Activated T-helper 1 cell treated with anti-CD3 and anti-CD28 coated beads, Interleukin-12 subunit alpha, Interleukin-12 subunit beta, Interleukin-2, Interleukin-4 antibody, amounts not matched to agents 30 ng/mL and 10 ng/mL and 1 ng/mL, durations not matched to agents 14 hours and 24 hours and 36 hours (primary cell): ENCODE measurements at regions of chr3 and their contacts with region 1.

Region 1: DNA sequence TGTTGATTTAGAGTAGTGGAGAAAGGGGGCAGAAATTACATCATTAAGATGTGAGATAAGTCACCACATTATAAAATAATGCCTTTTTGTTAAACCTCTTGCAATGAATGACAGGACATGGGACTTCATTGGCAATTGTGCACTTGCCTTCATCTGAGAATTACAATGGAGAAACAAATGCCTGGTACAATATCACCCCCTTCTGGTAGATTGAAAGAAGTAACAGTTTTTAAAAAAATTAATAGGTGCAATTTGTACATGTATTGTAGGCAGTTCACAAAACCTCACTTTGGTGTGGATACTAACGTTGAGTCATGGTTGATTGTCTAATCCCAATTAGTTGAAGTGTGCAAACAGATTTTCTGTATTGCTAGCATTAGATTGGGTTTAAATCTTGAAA is 4.6 kb upstream of the P2RY14 start:
- DNase-seq: no peak
- H3K4me3 Mint-ChIP-seq: no peak overlapping the region
- H3K27ac Mint-ChIP-seq: peak overlapping the region; percentile 38
- H3K4me1 Mint-ChIP-seq: peaks cover 56% of the 10 kb centered on the region
- H3K27me3 Mint-ChIP-seq: no peaks in the 10 kb centered on the region

Region 2: GRCh38 chr3:150787741-150788370 is 495.1 kb before region 1 on chr3:
- intact Hi-C with region 1: loop called (anchors 5 kb)
- DNase-seq: peak; percentile 61
- H3K4me3 Mint-ChIP-seq: peak overlapping the region; percentile 43
- H3K27ac Mint-ChIP-seq: no peak overlapping the region
- H3K4me1 Mint-ChIP-seq: peaks cover 52% of the 10 kb centered on the region
- H3K27me3 Mint-ChIP-seq: peaks cover 6% of the 10 kb centered on the region

Region 3: DNA sequence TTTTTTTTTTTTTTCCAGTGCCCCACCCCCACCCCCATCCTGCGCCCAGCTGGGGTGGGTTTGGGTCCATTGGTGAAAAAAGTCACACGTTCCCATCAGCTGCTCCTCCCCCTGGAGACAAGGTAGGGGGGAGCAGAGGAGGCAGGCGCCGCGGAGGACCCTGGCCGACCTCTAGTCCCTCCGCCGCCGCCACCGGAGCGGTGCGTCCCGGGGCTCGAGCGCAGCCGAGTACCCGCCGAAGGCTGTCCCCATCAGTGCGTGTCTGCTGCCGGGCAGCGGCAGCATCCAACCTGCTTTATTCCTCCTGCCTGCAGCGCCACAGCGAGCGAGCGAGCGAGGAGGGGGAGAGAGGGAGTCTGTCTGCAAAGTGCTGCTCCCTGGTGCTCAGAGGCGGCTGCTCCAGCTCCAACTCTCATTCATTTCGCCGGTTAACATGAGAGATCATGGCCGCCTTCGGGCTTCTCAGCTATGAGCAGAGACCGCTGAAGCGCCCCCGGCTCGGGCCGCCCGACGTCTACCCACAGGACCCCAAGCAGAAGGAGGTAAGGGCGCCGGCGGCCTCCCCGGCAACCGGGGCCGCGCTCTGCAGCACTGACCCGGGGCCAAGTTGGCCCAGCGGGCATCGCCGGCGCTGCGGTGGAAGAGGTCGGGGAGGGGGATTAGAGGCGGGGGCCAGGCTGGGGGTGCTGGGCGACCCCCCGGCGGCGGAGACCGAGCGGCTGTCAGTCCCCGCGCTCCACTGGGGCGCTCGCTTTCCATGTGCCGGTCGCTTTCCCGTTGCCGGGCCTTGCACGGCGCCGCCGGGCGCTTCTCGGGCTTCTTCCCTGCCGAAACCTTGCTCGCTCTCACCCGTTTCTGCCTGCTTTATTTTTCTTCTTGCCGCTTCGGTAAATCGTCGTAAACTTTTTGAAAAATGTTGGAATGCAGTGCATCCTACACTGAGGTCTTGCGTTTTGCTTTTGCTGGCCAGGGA is 196.2 kb before region 1 on chr3:
- intact Hi-C with region 1: loop called (anchors 1 kb)
- DNase-seq: peak; percentile 58
- H3K4me3 Mint-ChIP-seq: peak overlapping the region; percentile 85
- H3K27ac Mint-ChIP-seq: peak overlapping the region; percentile 27
- H3K4me1 Mint-ChIP-seq: peaks cover 4% of the 10 kb centered on the region
- H3K27me3 Mint-ChIP-seq: peaks cover 48% of the 10 kb centered on the region

Region 4: DNA sequence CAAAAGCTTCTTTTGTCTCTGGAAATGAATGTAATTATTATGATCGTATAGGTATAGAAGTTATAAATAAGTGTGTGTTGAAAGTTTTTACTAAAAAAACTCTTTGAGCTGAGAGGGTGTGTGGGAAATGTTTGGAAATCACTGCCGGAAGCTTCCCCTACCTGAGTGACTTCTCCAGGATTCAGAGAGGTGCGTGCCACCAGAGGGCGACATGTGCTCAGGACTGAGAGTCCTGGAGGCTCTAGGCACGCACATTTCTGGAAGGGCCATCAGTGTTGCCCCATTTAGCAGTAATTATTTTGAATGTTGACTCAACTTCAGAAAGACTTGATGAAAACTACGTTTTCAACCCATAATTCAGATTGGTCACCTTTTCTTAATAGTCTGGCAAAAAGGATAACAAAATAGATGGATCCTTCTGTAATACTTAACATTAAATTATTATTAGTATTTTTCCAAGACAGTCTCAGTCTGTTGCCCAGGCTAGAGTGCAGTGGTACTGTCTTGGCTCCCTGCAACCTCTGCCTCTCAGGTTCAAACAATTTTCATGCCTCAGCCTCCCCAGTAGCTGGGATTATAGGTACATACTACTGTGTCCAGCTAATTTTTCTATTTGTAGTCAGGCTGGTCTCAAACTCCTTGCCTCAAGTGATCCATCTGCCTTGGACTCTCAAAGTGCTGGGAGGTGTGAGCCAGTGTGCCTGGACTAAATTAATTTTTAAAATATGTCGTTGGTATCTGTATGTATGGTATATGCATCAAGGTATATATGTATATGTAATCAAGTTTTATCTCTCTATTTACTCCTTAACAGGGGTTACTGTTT is 114.4 kb before region 1 on chr3:
- intact Hi-C with region 1: loop called (anchors 1 kb)
- DNase-seq: peak; percentile 66
- H3K4me3 Mint-ChIP-seq: no peak overlapping the region
- H3K27ac Mint-ChIP-seq: no peak overlapping the region
- H3K4me1 Mint-ChIP-seq: peaks cover 46% of the 10 kb centered on the region
- H3K27me3 Mint-ChIP-seq: peaks cover 3% of the 10 kb centered on the region

Region 5: GRCh38 chr3:151265866-151266265 is 17.1 kb before region 1 on chr3:
- intact Hi-C with region 1: loop called (anchors 1 kb)
- DNase-seq: no peak
- H3K4me3 Mint-ChIP-seq: no peak overlapping the region
- H3K27ac Mint-ChIP-seq: no peak overlapping the region
- H3K4me1 Mint-ChIP-seq: peaks cover 66% of the 10 kb centered on the region
- H3K27me3 Mint-ChIP-seq: peaks cover 5% of the 10 kb centered on the region

Region 6: DNA sequence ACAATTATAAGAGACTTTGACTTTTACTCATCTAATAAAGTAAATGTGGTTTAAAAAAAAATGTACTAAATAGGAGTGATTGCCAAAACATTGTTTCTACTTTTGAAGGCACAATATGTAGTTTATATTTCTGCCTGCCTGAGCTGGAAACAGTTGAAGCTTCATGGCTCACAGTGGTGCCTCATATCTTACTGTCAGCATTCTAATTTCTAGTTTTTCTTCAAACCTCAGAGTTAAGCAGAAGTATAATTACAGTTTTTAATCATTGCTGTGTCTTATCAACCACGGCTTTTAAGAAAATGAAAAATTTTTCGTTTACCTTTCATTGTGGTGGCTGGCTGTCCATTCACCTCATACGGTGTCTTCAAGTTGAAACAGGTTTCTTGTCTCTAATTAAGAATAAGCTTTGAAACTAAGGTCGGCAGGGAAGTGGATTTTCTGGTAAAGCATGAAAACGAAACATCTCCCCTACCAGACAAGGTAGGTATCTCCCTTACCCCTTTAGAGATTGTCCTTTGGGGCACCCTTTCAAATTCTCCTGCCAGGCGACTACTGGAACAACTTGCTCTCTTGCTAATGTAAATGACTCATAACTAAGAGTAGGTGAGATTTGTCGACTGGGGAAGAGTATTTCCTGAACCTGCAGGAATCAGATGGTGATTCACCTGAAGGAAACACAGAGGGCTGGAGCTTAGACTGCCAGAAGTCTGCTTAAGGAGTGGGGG is 33.5 kb after region 1 on chr3 and contains the start of gene GPR87:
- intact Hi-C with region 1: loop called (anchors 1 kb)
- DNase-seq: no peak
- H3K4me3 Mint-ChIP-seq: peak within 1 kb of the TSS; percentile 7
- H3K27ac Mint-ChIP-seq: peak within 1 kb of the TSS; percentile 61
- H3K4me1 Mint-ChIP-seq: peaks cover 24% of the 10 kb centered on the region
- H3K27me3 Mint-ChIP-seq: no peaks in the 10 kb centered on the region
- total RNA-seq, gene GPR87: 0.62 and 0.93 TPM in 2 replicates